ENCODE measurements at regions of chr17 and their contacts with region 1.

Region 1: GRCh38 chr17:81636505-81637288 is at the starts of genes NPLOC4 and TSPAN10:
- DNase-seq: peak; percentile 69 to 97 (median 83)

Region 2: DNA sequence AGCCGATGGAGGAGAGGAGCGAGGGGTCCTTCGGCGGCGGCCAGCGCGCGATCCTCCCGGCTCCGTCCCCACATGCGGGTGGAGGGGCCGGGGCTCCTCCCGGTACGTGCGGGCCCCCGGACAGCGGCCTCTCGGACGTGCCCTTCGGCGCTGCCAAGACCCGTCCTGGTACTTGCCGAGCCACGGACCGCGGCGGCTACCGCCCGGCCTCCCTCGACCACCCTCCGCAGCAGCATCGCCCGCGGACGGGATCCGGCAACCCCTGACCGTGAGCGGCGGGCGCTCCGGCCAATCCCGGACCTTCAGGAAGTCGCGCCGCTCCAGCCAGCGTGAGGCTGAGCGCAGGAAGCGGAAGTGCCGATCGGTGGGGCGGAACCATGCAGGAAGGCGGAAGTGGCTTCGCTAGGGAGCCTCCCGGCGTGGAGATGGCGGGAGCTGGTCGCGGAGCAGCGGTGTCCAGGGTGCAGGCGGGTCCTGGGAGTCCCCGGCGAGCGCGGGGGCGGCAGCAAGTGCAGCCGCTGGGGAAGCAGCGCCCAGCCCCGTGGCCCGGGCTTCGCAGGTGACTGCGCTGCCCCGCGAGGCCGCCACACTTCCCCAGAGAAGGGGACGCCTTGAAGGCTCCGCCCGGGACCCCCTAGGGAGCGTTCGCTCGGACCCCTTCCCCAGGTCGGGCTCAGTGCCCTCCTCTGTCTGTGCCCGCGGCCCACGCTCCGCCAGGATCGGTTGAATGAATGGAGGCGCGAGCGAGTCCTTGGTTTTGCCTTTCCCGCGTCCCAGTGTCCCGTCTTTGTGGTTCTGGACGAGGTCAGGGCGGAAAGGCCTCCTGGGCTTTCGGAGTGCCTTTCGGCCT is 29.9 kb after region 1 on chr17 and contains the starts of genes CCDC137 and OXLD1:
- intact Hi-C with region 1: loop called (anchors 2 kb)
- DNase-seq: peak; percentile 94 to 99 (median 98)

Region 3: DNA sequence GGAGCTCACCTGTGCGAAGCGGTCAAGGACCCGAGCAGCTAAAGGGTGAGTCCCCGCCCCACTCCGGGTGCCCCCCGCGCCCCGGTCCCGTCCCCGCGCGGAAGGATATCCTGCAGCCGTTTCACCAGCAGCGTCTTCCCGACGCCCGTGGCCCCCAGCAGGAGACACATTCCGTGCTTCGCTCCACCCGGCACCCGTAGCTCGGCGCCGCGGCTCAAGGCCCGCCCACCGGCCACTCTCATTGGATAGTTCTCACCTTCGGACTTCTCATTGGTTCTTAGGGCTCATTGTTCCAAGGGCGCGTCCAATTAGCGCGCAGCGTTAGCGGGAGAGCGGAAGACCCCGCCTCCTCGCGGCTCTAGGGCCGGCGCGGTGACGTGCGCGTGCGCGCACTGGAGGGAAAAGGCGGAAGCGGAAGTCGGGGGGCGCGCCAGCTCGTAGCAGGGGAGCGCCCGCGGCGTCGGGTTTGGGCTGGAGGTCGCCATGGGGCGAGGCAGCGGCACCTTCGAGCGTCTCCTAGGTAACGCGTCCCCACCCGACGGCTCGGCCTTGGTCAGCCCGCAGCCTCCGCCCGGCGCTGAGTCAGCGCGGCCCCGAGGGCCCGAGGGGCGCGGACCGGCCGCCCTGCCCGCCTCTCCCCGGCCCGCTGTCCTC is 47.0 kb after region 1 on chr17 and contains the starts of genes ARL16 and HGS:
- intact Hi-C with region 1: loop called (anchors 5 kb)
- DNase-seq: peak; percentile 95 to 99 (median 96)

Region 4: DNA sequence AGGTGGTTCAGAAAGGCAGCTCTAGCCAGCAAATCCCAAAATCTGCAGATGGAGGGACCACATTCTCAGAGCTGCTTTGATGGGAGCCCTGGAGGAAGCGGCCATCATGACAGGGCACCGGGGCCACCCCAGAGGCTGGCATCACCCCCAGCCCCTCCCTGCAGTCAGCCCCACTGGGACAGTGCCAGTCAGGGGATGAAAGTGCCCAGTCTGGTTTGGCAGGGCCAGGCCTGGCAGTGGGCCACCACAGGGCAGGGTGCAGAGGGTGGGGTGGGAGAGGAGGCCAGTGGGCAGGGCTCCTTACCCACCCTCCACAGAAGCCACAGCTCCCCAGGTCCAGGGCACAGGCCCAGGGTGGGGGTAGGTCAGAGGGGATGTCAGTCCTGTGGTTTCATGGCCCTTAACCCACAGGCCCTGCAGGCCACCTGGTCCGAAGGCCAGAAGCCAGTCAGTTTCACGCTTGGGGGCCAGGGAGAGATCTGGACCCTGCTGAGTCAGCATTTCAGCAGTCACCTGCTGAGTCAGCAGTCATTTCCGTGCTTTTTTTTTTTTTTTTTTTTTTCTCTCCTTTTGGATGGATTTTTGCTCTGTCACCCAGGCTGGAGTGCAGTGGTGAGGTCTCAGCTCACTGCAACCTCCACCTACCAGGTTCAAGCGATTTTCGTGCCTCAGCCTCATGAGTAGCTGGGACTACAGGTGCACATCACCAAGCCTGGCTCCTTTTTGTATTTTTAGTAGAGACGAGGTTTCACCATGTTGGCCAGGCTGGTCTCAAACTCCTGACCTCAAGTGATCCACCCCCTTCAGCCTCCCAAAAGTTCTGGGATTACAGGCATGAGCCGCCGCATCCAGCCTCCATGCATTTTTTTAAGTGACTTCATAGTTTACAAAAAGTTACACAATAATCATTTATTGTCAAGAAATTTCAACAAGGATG is 85.8 kb after region 1 on chr17:
- intact Hi-C with region 1: no loop called
- DNase-seq: peak in 4 of 10 donors; percentile 41 to 75 (median 46)